Breast epithelium (tissue), 4 donors: ENCODE measurements at regions of chr4 and their contacts with region 1.

Region 1: DNA sequence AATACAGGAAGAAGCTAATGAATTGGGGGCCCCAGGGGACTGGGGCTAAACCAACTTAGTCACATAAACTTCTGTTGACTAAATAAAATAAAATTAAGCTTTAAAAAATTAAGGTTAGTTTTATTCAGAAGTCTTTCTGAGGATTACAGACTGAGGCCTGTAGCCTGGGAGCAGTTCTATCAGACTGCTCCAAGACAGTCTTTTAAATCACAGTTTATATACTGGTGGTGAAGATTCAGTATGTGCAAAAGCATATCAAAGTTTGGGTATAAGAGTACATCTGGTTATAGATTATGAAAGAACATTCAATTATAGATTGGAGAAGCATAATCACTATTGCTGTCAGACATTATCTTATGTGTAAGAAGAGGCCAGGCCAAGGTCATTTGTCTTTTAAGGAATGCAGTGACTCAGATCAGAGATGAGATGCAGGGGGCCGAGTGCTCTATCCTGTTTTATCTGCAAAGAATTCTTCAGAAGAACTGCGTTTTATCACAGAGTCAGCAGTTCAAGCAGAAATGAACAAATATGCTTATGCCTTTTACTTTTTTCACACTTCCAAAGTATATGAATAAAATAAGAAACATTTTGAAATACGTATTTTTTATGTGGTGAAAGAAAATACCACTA is 109.4 kb downstream of the PDHA2 start:
- DNase-seq: no peak
- H3K4me3 ChIP-seq: no peak overlapping the region
- H3K27ac ChIP-seq: no peak overlapping the region
- H3K4me1 ChIP-seq: no peaks in the 10 kb centered on the region
- H3K27me3 ChIP-seq: no peaks in the 10 kb centered on the region
- CTCF ChIP-seq: no peak
- POLR2A ChIP-seq: no peak

Region 2: GRCh38 chr4:95889662-95890061 is 59.6 kb before region 1 on chr4:
- intact Hi-C with region 1: no loop called
- DNase-seq: no peak
- H3K4me3 ChIP-seq: no peak overlapping the region
- H3K27ac ChIP-seq: no peak overlapping the region
- H3K4me1 ChIP-seq: no peaks in the 10 kb centered on the region
- H3K27me3 ChIP-seq: no peaks in the 10 kb centered on the region
- CTCF ChIP-seq: no peak
- POLR2A ChIP-seq: no peak

Region 3: GRCh38 chr4:96525898-96526297 is 576.6 kb after region 1 on chr4:
- intact Hi-C with region 1: loop called (anchors 5 kb)
- DNase-seq: no peak
- H3K4me3 ChIP-seq: no peak overlapping the region
- H3K27ac ChIP-seq: no peak overlapping the region
- H3K4me1 ChIP-seq: no peaks in the 10 kb centered on the region
- H3K27me3 ChIP-seq: no peaks in the 10 kb centered on the region
- CTCF ChIP-seq: no peak
- POLR2A ChIP-seq: no peak